ENCODE measurements at regions of chr12 and their contacts with region 1.

Region 1: GRCh38 chr12:47715393-47715876 is 9.6 kb upstream of the RPAP3 start:
- DNase-seq: peak; percentile 68 to 81
- H3K4me3 ChIP-seq: no peak overlapping the region
- H3K4me1 ChIP-seq: no peaks in the 10 kb centered on the region
- H3K27me3 ChIP-seq: no peaks in the 10 kb centered on the region

Region 2: DNA sequence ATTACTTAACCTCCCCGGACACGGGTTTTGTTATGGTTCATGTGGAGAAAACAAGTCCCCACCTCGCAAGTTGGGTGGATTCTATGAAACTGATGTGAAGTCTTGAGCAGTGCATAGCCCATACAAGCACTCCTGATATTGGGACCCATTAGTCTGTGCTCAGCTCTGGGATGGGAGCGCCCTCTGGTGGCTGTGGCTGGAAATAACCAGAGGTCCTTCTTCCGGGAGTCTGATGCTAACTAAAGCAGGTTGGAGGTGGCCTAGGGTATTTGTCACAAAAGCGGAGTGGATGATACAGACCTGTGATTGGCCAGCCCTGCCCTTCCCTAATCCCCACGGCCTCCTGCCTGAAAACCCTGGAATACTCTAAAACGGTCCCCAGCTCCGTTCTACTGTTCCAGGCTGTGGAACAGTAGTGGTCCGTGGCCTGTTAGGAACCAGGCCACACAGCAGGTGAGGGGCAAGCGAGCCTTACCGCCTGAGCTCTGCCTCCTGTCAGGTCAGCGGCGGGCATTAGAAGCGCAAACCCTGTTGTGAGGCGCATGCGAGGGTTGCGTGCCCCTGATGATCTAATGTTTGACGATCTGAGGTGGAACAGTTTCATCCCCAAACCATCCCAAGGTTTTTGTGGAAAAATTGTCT is 64.0 kb after region 1 on chr12:
- in situ Hi-C with region 1: loop called (anchors 10 kb)
- DNase-seq: peak; percentile 70 to 94
- H3K4me3 ChIP-seq: no peak overlapping the region
- H3K4me1 ChIP-seq: peaks cover 12% of the 10 kb centered on the region
- H3K27me3 ChIP-seq: no peaks in the 10 kb centered on the region

Region 3: DNA sequence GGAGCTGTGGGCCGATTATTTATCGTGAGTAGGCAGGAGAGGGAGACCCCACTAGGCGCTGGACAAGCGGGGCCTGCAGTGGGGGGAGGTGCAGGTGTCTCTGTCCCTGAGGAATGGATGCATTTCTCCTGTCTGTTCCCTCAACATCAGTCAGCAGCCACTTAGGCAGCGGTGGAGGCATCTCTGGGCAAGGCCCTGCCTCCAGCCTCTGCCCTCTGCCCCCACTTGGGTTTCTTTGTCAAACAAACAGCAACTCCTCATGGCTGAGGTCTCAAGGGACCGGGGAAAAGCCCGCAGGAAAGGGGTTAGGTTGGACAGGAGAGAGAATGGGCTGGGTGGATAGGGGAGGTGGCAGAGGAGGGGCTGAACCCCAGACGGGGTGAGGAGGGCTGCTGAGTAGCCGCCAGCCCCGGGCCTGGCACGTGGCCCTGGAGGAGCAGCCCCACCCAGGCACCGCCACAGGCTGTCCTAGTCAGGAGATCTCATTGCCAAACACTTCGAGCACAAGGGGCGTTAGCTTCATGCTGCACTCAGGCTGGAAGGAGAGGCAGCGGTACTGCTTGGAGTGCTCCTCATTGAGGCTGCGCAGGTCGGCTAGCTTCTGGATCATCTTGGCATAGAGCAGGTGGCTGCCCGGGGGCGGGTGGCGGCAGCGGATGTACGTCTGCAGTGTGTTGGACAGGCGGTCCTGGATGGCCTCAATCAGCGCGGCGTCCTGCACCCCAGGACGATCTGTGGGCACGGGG is 129.0 kb after region 1 on chr12:
- in situ Hi-C with region 1: loop called (anchors 10 kb)
- DNase-seq: no peak
- H3K4me3 ChIP-seq: no peak overlapping the region
- H3K4me1 ChIP-seq: no peaks in the 10 kb centered on the region
- H3K27me3 ChIP-seq: peaks cover 8% of the 10 kb centered on the region

Region 4: DNA sequence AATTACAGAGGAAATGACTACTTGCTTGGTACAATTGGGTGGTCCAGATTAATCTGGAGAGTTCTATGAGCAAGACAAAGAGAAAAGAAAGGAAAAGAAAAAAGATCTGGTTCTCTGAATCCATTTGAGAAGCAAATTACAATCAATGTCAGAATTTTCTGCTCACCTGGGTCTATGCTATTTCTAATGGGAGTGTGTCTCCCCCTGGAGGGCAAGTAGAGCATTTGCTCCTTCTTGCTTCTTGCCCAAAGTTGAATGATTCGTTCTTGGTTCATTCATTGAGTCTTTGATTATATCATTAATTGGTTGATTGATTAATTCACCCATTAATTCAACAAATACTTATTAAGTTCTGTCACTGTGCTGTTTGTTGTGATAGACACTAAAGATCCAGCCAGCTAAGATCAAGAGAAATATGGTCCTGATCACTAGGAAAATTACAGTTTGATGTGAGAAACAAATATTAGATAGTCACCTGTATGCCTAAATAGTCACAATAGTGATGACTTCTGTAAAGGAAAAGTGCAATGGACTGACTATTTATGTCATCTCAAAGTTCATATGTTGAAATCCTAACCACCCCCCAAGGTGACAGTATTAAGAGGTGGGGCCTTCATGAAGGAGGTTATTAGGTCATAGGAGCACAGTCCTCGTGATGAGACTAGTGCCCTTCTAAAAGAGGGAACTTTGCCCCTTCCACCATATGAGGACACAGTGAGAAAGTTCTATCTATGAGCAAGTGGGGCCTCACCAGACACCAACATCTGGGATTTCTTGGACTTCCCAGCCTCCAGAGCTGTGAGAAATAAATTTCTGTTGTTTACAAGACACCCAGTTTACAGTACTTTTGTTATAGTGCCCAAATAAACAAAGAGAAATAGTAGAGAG is 449.9 kb after region 1 on chr12:
- in situ Hi-C with region 1: loop called (anchors 10 kb)
- DNase-seq: peak; percentile 69 to 71
- H3K4me3 ChIP-seq: no peak overlapping the region
- H3K4me1 ChIP-seq: peaks cover 15% of the 10 kb centered on the region
- H3K27me3 ChIP-seq: no peaks in the 10 kb centered on the region

Measured in HAP-1 (cell line).